Activated T-helper 2 cell treated with anti-CD3 and anti-CD28 coated beads, Interferon-gamma antibody, Interleukin-2, Interleukin-4, amounts not matched to agents 10 μg/mL and 5 μg/mL and 100 μg/mL, durations not matched to agents 14 hours and 24 hours and 36 hours (primary cell): ENCODE measurements at regions of chr5 and their contacts with region 1.

Region 1: GRCh38 chr5:69093771-69094482 is at the start of gene SLC30A5:
- DNase-seq: peak; percentile 99
- H3K4me3 Mint-ChIP-seq: peak within 1 kb of the TSS; percentile 92
- H3K27ac Mint-ChIP-seq: peak within 1 kb of the TSS; percentile 94
- H3K4me1 Mint-ChIP-seq: peaks cover 23% of the 10 kb centered on the region
- H3K27me3 Mint-ChIP-seq: no peaks in the 10 kb centered on the region
- total RNA-seq, gene SLC30A5: 59.6 and 64.1 TPM in 2 replicates

Region 2: GRCh38 chr5:69042915-69043658 is 50.8 kb before region 1 on chr5:
- intact Hi-C with region 1: loop called (anchors 5 kb)
- DNase-seq: peak; percentile 73
- H3K4me3 Mint-ChIP-seq: peak overlapping the region; percentile 82
- H3K27ac Mint-ChIP-seq: peak overlapping the region; percentile 72
- H3K4me1 Mint-ChIP-seq: peaks cover 19% of the 10 kb centered on the region
- H3K27me3 Mint-ChIP-seq: no peaks in the 10 kb centered on the region

Region 3: DNA sequence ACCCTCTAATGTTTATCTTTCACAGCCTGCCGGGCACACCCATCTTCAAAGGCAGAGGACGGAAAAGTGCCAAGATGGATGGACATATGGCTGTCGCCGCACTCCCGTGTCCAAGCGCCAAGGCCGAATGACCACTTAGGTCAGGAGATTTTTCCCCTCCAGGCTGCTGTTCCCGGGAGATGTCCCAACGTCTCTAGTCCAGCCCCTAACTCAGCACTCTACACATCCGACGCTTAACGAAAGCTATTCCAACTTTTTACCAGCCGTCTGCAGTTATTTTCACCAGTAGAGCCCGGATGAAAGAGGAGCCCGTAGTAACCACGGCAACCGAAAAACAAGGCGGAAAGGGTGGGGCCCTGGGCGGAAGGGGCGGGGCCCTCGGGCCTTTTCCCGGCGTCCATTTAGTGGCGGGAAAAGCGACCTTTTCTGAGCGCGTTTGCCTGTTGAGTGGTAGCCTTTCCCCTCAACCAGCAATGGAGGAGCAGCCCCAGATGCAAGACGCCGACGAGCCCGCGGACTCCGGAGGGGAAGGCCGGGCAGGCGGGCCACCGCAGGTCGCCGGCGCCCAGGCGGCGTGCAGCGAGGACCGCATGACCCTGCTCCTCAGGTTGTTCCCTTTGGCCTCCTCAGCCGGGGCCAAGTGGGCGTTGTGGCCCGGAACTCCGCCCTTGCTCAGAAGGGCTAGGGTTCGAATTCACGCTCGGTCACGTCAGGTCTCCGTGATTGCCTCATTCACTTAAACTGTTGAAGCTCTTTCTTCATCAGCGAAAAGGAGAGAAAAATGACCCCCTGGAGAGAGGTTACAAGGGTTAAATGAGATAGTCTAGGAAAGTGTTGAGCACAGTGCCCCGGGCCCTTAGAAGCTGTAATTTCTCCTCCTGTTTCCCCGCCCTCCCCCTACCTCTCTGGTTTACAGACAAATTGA is 95.5 kb after region 1 on chr5 and contains the start of gene CENPH:
- intact Hi-C with region 1: loop called (anchors 1 kb)
- DNase-seq: peak; percentile 93
- H3K4me3 Mint-ChIP-seq: peak within 1 kb of the TSS; percentile 92
- H3K27ac Mint-ChIP-seq: peak within 1 kb of the TSS; percentile 97
- H3K4me1 Mint-ChIP-seq: peaks cover 13% of the 10 kb centered on the region
- H3K27me3 Mint-ChIP-seq: no peaks in the 10 kb centered on the region
- total RNA-seq, gene CENPH: 35.3 and 37.0 TPM in 2 replicates

Region 4: DNA sequence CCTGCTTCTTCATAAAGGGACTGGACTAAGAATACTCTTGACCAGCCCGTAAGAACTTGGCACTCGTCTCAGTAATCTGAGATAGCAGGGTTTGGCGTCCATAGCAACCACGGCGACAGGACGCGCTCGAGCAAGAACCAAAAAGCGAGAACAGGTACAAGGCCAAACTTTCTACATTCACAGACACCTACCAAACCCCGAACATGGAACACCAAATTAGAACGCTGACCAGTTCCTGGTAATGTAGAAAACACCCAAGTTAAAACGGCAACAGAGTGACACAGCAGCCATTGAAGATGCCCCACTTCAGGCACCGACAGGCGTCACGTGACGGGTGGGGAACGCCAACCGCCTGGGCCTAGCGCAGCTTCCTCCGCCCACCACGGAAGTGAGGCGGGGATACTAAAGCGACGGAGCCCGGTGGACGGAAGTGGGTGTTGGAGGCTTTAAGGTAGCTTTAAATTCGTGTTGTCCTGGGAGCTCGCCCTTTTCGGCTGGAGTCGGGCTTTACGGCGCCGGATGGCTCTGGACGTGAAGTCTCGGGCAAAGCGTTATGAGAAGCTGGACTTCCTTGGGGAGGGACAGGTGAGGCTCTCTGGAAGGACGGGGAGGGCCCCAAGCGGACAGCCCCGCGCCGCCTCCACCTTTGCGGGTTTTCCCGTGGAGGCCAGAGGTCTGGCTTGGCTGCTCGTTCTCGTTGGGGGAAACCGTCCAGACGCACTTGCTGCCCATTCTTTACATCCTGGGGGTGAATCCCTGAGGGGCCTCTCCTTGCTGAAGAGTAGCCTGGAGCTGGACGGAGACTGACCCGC is 140.7 kb after region 1 on chr5 and contains the start of gene CDK7:
- intact Hi-C with region 1: loop called (anchors 1 kb)
- DNase-seq: peak; percentile 91
- H3K4me3 Mint-ChIP-seq: peak within 1 kb of the TSS; percentile 95
- H3K27ac Mint-ChIP-seq: peak within 1 kb of the TSS; percentile 80
- H3K4me1 Mint-ChIP-seq: peaks cover 30% of the 10 kb centered on the region
- H3K27me3 Mint-ChIP-seq: no peaks in the 10 kb centered on the region
- total RNA-seq, gene CDK7: 46.0 and 49.4 TPM in 2 replicates

Region 5: GRCh38 chr5:69369369-69370121 is 275.6 kb after region 1 on chr5 and contains the starts of genes AK6, RAD17 and TAF9:
- intact Hi-C with region 1: loop called (anchors 1 kb)
- DNase-seq: peak; percentile 90
- H3K4me3 Mint-ChIP-seq: peak within 1 kb of the TSS; percentile 96
- H3K27ac Mint-ChIP-seq: peak within 1 kb of the TSS; percentile 97
- H3K4me1 Mint-ChIP-seq: peaks cover 31% of the 10 kb centered on the region
- H3K27me3 Mint-ChIP-seq: no peaks in the 10 kb centered on the region
- total RNA-seq, gene AK6: 59.8 and 60.1 TPM in 2 replicates
- total RNA-seq, gene RAD17: 24.7 and 28.0 TPM in 2 replicates
- total RNA-seq, gene TAF9: 58.0 and 63.2 TPM in 2 replicates